Activated naive CD4-positive, alpha-beta T cell treated with anti-CD3 and anti-CD28 coated beads for 36 hours (primary cell): ENCODE measurements at regions of chr15 and their contacts with region 1.

Region 1: DNA sequence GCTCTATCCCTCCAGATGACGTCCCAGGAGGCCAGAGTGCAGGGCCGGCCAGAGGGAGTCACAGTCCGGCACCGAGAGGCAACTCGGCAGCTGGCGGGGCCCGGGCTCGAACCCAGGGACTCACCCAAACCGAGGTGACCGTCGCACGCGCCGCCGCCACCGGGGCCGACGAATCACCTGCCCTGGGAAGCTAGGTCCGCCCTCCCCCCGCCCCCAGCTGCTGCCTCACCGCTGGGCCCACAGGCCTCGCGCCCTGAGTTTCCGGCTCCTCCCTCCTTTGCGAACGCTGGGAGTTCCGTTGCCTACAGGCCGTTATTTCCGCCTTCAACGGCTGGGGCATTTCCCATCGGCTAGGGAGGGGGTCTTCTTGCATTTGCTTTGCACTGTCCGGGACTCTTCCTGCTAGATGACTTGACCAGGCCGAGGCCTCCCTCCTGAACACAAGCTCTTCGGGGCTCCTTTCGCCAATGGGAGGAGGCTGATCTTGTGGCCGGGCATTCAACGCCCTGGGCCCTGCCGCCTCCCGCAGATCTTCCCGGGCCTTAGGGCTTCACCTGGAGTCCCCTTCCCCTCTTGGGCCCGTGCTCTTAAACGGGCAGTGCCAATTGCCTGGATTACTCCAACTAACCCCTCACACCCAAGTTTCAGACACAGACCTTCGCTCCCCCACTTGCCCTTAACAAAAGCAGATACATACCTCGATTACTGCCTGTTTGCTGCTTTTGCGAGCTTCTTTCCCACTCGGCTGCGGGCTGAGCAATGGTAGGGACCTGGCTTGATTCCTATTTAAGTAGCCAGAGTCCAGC is at the start of gene SNUPN:
- DNase-seq: peak; percentile 98
- H3K4me3 Mint-ChIP-seq: peak within 1 kb of the TSS; percentile 95
- H3K27ac Mint-ChIP-seq: peak within 1 kb of the TSS; percentile 99
- H3K4me1 Mint-ChIP-seq: peaks cover 41% of the 10 kb centered on the region
- H3K27me3 Mint-ChIP-seq: no peaks in the 10 kb centered on the region
- total RNA-seq, gene SNUPN: 28.5 to 33.1 TPM

Region 2: DNA sequence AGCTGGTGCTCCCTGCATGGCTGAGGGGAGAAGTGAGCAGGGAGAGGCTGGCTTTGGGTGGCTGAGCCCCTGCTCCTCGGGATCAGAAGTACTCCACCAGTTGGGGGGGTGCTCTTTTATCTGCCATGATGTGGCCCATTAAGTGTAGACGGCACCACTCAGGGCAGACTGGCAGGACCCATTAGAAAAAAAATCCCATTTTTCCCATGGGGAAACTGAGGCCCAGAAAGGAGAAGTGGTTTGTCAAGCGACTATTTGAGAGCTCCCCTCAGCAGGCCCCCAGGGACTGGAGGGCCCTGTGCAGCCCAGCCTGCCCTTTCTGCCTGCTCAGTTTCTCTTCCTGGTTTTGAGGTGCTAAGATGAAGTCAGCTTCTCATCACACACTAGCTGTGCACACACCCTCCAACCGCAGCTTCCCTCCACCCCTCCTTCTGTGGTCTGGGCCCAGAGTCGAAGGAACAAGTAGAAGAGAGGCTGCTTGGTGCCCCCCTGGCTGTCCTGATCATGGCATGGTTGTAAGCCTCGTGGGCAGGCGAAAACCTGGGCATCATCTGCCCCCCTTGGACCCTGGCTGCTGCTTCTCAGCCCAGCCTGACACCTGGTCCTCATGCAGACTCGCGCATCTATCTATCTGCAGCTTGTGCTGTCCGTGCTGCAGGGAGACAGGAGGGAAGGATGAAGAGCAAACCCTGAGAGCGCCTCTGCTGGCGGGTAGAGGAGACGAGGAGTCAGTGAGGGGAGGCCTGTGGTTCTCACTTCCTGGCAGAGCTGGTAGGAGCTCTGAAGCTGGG is 838.3 kb before region 1 on chr15:
- CTCF ChIA-PET with region 1: no interaction called
- intact Hi-C with region 1: loop called (anchors 10 kb)
- DNase-seq: peak; percentile 98
- H3K4me3 Mint-ChIP-seq: peak overlapping the region; percentile 93
- H3K27ac Mint-ChIP-seq: peak overlapping the region; percentile 99
- H3K4me1 Mint-ChIP-seq: peaks cover 55% of the 10 kb centered on the region
- H3K27me3 Mint-ChIP-seq: no peaks in the 10 kb centered on the region

Region 3: DNA sequence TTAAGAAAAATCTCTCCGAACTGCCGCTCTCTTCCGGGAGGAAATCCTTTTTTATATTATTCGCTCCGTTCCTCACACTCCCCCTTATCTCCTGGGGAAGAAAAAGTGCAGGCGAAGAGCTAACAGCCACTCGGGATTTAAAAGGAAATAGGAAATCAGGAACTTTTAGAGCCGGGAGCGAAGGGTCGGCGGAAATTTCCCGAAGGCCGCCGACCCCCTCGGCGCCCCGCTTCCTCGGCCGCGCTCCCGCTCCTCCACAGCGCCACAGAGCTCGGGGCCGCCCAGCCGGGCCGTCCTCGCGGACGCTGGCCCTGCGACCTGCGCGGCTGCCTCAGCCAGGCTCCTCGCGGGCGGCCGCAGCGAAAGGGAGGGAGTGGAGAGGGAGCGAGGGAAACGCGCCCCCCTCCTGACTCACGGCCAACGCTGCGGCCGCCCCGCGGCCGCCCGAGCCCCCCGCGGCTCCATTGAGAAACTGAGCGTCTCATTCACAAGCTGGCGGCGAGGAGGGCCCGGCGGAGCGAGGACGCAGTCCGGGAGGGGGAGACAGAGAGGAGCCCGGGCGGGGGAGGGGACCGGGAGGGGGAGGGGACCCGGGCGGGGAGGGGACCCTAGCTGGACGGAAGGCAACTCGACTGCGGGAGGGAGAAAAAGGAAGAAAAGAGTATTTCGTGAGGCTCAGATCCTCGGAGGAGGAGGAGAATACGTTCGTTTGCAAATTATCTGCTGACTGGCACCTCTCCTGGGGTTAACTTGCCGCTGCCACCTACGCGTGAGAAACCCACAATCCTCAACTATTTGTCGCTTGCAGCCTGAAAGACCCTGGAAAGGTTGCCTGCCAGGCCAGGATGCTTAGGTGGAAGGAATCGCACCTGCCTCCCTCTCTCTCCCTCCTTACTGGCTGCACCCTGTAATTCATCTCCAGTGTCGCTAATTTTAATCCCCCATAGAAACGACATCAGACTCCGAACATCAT is 46.5 kb before region 1 on chr15 and contains the start of gene PTPN9:
- CTCF ChIA-PET with region 1: interaction called, 3 read pairs
- intact Hi-C with region 1: loop called (anchors 1 kb)
- DNase-seq: peak; percentile 76
- H3K4me3 Mint-ChIP-seq: peak within 1 kb of the TSS; percentile 90
- H3K27ac Mint-ChIP-seq: peak within 1 kb of the TSS; percentile 86
- H3K4me1 Mint-ChIP-seq: peaks cover 14% of the 10 kb centered on the region
- H3K27me3 Mint-ChIP-seq: no peaks in the 10 kb centered on the region
- total RNA-seq, gene PTPN9: 9.5 to 10.1 TPM

Region 4: DNA sequence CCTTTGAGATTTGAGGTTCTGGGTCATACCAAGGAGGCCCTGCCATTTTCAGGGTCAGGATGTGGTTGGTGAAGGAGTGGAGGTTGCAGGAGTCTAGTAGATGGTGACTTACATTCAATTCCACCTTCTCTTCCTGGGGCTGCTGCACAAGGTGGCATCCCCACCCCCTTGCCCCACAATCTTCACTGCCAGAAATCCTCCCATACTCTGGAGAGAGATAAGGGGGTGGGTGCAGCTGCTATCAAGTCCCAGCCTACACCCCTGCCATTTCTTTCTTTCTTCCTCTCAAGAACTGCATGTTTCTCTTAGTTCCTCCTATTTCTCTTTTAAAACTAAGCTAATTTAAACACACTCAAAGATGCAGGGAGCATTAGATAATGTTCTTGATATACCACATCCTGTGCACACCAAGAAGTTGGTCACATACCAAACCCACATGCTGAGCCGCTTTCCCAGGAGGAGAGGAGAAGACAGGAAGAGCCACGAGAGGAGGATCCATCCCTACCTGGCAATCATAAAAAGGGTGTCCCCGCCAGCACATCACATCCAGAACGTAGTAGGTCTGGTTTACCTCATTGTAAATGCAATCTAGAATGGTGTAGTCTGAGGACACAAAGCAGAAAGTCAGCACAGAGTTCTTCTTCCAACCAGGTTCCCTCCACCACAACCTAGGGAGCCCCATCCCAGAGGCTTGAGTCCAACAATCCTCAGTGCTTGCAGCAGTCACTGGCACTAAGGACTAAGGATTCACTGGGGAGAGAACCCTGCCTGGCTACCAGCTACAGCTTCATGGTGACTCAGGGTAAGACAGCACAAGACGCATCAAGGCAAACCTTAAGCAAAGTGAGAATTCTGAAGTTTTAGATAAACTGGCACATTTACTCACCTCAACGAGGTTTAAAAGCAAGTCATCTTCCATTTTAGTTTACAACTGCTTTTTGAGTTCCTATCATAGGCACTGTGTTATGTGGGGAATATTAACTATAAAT is 18.7 kb before region 1 on chr15:
- CTCF ChIA-PET with region 1: no interaction called
- intact Hi-C with region 1: loop called (anchors 1 kb)
- DNase-seq: peak; percentile 40
- H3K4me3 Mint-ChIP-seq: no peak overlapping the region
- H3K27ac Mint-ChIP-seq: peak overlapping the region; percentile 79
- H3K4me1 Mint-ChIP-seq: peaks cover 43% of the 10 kb centered on the region
- H3K27me3 Mint-ChIP-seq: no peaks in the 10 kb centered on the region